WTC11 (cell line): ENCODE measurements at regions of chr5 and their contacts with region 1.

Region 1: GRCh38 chr5:127492854-127493738 is 24.3 kb upstream of the PRRC1 start:
- DNase-seq: no peak
- ATAC-seq: peak; percentile 38
- H3K4me3 Mint-ChIP-seq: no peak overlapping the region
- H3K27ac Mint-ChIP-seq: no peak overlapping the region
- H3K4me1 Mint-ChIP-seq: no peaks in the 10 kb centered on the region
- H3K27me3 Mint-ChIP-seq: peaks cover 5% of the 10 kb centered on the region; the same call in 1 of the 2 replicates
- CTCF ChIP-seq: peak; percentile 60

Region 2: GRCh38 chr5:127292030-127292735 is 200.9 kb before region 1 on chr5:
- CTCF ChIA-PET with region 1: interaction called, 10 read pairs
- POLR2A ChIA-PET with region 1: no interaction called
- DNase-seq: no peak
- ATAC-seq: no peak
- H3K4me3 Mint-ChIP-seq: peak overlapping the region; percentile 92
- H3K27ac Mint-ChIP-seq: no peak overlapping the region
- H3K4me1 Mint-ChIP-seq: peaks cover 42% of the 10 kb centered on the region
- H3K27me3 Mint-ChIP-seq: no peaks in the 10 kb centered on the region
- CTCF ChIP-seq: no peak

Region 3: GRCh38 chr5:127299678-127300077 is 193.4 kb before region 1 on chr5:
- CTCF ChIA-PET with region 1: interaction called, 25 read pairs
- POLR2A ChIA-PET with region 1: no interaction called
- DNase-seq: no peak
- ATAC-seq: peak; percentile 64
- H3K4me3 Mint-ChIP-seq: no peak overlapping the region
- H3K27ac Mint-ChIP-seq: peak overlapping the region; percentile 46
- H3K4me1 Mint-ChIP-seq: peaks cover 50% of the 10 kb centered on the region
- H3K27me3 Mint-ChIP-seq: no peaks in the 10 kb centered on the region
- CTCF ChIP-seq: no peak

Region 4: GRCh38 chr5:127505905-127506304 is 12.8 kb after region 1 on chr5:
- CTCF ChIA-PET with region 1: interaction called, 11 read pairs
- POLR2A ChIA-PET with region 1: interaction called, 4 read pairs
- DNase-seq: no peak
- ATAC-seq: no peak
- H3K4me3 Mint-ChIP-seq: no peak overlapping the region
- H3K27ac Mint-ChIP-seq: no peak overlapping the region
- H3K4me1 Mint-ChIP-seq: peaks cover 10% of the 10 kb centered on the region
- H3K27me3 Mint-ChIP-seq: no peaks in the 10 kb centered on the region
- CTCF ChIP-seq: no peak